PC-3 (cell line): ENCODE measurements at regions of chr14 and their contacts with region 1.

Region 1: DNA sequence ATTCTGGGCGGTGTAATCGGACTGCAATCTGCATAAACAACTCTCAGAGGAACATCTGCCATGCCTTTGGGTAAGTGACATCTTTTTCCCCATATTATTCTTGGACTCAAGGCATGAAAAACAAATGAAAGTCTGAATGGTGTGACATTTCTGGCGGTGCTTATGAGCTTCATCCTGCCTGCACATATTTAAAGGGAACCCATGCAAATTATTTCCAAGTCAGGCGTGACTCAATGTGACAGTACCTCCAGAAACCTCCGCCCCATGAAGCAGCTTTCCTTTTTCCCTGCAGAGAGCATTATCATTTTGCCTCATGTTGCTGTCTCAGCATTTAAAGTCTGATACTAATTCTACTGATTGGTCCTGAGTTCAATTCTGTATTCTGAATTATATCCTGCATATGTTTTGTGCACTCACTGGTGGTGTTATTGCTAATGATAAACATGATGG is 585.4 kb downstream of the SNAPC1 start:
- DNase-seq: no peak
- ATAC-seq: no peak
- H3K4me3 ChIP-seq: no peak overlapping the region
- H3K27ac ChIP-seq: no peak overlapping the region
- H3K4me1 ChIP-seq: no peaks in the 10 kb centered on the region
- H3K27me3 ChIP-seq: 0 out of 2 replicates have a peak, but pooled peaks cover 3% of the 10 kb centered on the region
- CTCF ChIP-seq: no peak

Region 2: DNA sequence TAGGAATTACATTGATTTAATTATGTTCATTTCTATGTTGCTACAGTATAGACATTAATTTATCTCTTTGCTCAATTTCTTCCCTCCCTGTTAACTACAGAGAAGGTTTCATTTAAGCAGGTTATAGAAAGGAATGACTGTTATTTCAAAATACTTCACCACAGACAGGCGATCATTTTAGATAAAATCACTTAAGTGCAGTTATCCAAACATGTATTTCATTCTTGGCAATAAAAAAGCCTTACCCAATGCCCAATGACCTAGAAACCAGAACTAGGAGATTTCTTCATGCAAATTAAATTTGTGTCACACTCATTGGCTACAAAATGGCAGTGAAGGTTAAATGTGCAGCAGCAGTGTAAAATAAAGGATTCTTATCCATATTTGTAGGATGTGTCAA is 431.3 kb after region 1 on chr14:
- CTCF ChIA-PET with region 1: no interaction called
- POLR2A ChIA-PET with region 1: no interaction called
- intact Hi-C with region 1: no loop called
- DNase-seq: no peak
- ATAC-seq: no peak
- H3K4me3 ChIP-seq: no peak overlapping the region
- H3K27ac ChIP-seq: no peak overlapping the region
- H3K4me1 ChIP-seq: no peaks in the 10 kb centered on the region
- H3K27me3 ChIP-seq: peaks cover 4% of the 10 kb centered on the region
- CTCF ChIP-seq: no peak

Region 3: GRCh38 chr14:63745858-63746425 is 1398.4 kb after region 1 on chr14:
- CTCF ChIA-PET with region 1: no interaction called
- POLR2A ChIA-PET with region 1: interaction called, 13 read pairs
- intact Hi-C with region 1: no loop called
- DNase-seq: no peak
- ATAC-seq: peak; percentile 50
- H3K4me3 ChIP-seq: no peak overlapping the region
- H3K27ac ChIP-seq: no peak overlapping the region
- H3K4me1 ChIP-seq: no peaks in the 10 kb centered on the region
- H3K27me3 ChIP-seq: no peaks in the 10 kb centered on the region
- CTCF ChIP-seq: no peak